Right lobe of liver (tissue), 6 donors: ENCODE measurements at regions of chr21 and their contacts with region 1.

Region 1: GRCh38 chr21:46000731-46001641 is 19.4 kb downstream of the COL6A1 start:
- DNase-seq: peak in 1 of 3 donors; percentile 23
- ATAC-seq: peak in 2 of 4 donors; percentile 3 to 13
- H3K4me3 ChIP-seq: no peak overlapping the region
- H3K27ac ChIP-seq: no peak overlapping the region
- H3K4me1 ChIP-seq: no peaks in the 10 kb centered on the region
- H3K27me3 ChIP-seq: no peaks in the 10 kb centered on the region
- CTCF ChIP-seq: no peak
- POLR2A ChIP-seq: no peak

Region 2: GRCh38 chr21:45950734-45951515 is 50.1 kb before region 1 on chr21:
- intact Hi-C with region 1: no loop called
- DNase-seq: no peak
- ATAC-seq: peak in 1 of 4 donors; percentile 37
- H3K4me3 ChIP-seq: no peak overlapping the region
- H3K27ac ChIP-seq: no peak overlapping the region
- H3K4me1 ChIP-seq: no peaks in the 10 kb centered on the region
- H3K27me3 ChIP-seq: no peaks in the 10 kb centered on the region
- CTCF ChIP-seq: no peak
- POLR2A ChIP-seq: no peak

Region 3: DNA sequence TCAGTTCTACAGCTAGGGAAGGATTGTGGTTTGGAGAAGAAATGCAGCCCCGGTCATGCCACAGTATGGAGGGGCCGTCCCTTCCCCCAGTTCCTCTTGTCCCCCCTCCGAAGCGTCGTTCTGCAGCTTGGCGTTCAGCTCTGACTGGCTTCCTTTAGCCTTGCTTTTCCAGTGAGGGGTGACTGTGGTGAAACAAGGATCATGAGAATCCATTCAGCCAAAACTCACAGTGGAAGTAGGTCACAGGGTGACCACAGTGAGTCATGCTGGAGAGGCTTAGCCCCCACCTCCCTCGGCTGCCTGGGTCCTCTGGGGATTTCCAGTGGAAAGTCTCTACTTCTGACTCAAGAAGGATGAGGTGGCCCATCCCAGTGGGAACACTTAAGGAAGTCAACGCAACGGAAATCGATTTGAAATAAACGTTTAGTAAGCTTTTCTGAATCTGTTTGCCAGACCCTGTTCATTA is 59.6 kb after region 1 on chr21:
- intact Hi-C with region 1: loop called in 1 of 2 experiments (anchors 10 kb)
- DNase-seq: peak in 2 of 3 donors; percentile 36 to 44
- ATAC-seq: peak in 2 of 4 donors; percentile 10 to 61
- H3K4me3 ChIP-seq: no peak overlapping the region
- H3K27ac ChIP-seq: peak overlapping the region in 1 of 3 donors; percentile 65
- H3K4me1 ChIP-seq: no peaks in the 10 kb centered on the region
- H3K27me3 ChIP-seq: no peaks in the 10 kb centered on the region
- CTCF ChIP-seq: no peak
- POLR2A ChIP-seq: no peak